Adrenal gland (tissue), 19 donors: ENCODE measurements at regions of chr12 and their contacts with region 1.

Region 1: DNA sequence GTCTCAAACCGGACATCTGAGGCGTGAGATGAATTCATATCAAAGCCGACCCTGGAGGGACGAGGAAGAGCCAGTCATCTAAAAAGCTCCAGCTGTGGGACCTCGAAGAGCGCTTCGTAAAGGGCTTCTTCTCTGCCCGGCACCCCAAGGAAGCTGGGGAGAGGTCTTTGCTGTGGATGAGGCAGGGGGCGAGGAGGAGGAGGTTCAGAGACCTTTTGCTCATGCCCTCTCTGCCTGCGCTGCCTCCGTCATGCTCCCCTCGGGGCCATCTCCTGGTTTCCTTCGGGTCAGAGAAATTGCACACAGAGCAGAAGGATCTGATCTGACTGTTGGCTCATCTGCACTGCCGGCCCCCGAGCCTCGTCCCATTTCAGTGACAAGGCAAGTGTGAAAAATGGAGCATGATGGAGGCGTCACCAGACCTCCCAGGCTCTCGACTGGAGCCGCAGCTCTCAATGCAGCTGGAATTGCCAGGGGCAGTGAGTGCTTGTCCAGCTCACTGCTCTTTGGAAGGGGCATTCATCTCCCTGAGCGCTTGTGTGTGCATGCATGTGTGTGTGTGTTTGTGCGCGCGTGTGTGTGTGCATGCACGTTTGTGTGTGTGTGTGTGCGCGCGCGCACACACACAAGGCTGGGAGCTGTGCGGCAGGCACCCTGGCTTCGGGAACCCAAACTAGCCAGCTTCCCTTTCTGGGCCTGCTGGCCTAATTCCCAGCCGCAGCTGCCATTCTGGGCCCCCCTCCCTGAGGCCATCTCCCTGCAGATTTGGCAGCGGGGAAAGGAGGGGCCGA is 9.2 kb downstream of the CABP1 start:
- DNase-seq: no peak
- H3K4me3 ChIP-seq: peak overlapping the region in 1 of 4 donors; percentile 39
- H3K27ac ChIP-seq: no peak overlapping the region
- H3K4me1 ChIP-seq: peaks cover 4 to 8% of the 10 kb centered on the region in 2 donors
- H3K27me3 ChIP-seq: peaks cover 5% of the 10 kb centered on the region
- CTCF ChIP-seq: peak in 1 of 6 experiments; percentile 6
- POLR2A ChIP-seq: no peak

Region 2: GRCh38 chr12:120580787-120581723 is 68.6 kb before region 1 on chr12 and contains the start of gene POP5:
- intact Hi-C with region 1: loop called (anchors 5 to 10 kb)
- DNase-seq: peak; percentile 96 to 99 (median 98)
- H3K4me3 ChIP-seq: peak within 1 kb of the TSS; percentile 30 to 66 (median 56)
- H3K27ac ChIP-seq: peak within 1 kb of the TSS in 4 of 5 donors; percentile 26 to 80 (median 66)
- H3K4me1 ChIP-seq: peaks cover 11 to 26% of the 10 kb centered on the region in 2 donors
- H3K27me3 ChIP-seq: no peaks in the 10 kb centered on the region
- CTCF ChIP-seq: no peak
- POLR2A ChIP-seq: peak; percentile 27 to 84
- total RNA-seq, gene POP5: 31.4 to 92.4 (median 65.0) TPM

Region 3: DNA sequence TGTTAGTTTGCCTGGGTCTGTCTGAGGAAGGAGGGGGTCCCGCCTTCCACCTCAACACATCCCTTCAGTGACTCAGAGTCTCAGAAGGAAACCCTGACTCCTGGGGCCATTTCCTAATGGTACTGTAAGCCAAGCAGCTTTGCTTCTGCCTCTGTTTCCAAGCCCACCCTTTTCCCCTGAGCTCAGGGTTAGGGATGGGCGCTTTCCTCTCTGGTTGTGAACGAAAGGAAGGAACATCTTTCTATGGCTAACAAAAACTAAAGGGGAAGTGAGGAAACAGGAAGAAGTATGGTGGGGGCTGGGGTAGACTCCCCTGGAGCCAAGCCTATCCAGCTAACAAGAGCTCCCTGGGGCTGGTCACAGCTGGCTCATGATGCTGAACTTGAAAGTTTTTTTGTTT is 49.0 kb after region 1 on chr12:
- intact Hi-C with region 1: no loop called
- DNase-seq: no peak
- H3K4me3 ChIP-seq: no peak overlapping the region
- H3K27ac ChIP-seq: peak overlapping the region in 3 of 5 donors; percentile 21 to 51 (median 28)
- H3K4me1 ChIP-seq: peaks cover 15 to 28% of the 10 kb centered on the region in 2 donors
- H3K27me3 ChIP-seq: no peaks in the 10 kb centered on the region
- CTCF ChIP-seq: no peak
- POLR2A ChIP-seq: no peak